WTC11 (cell line): ENCODE measurements at regions of chr1 and their contacts with region 1.

Region 1: GRCh38 chr1:30684881-30685795 is 38.2 kb downstream of the MATN1 start:
- DNase-seq: peak; percentile 99
- ATAC-seq: peak; percentile 98
- H3K4me3 Mint-ChIP-seq: peak overlapping the region; percentile 71
- H3K27ac Mint-ChIP-seq: no peak overlapping the region
- H3K4me1 Mint-ChIP-seq: peaks cover 24% of the 10 kb centered on the region
- H3K27me3 Mint-ChIP-seq: peaks cover 22% of the 10 kb centered on the region
- CTCF ChIP-seq: no peak

Region 2: GRCh38 chr1:29900712-29901111 is 784.4 kb before region 1 on chr1:
- CTCF ChIA-PET with region 1: no interaction called
- POLR2A ChIA-PET with region 1: interaction called, 11 read pairs
- DNase-seq: no peak
- ATAC-seq: no peak
- H3K4me3 Mint-ChIP-seq: no peak overlapping the region
- H3K27ac Mint-ChIP-seq: no peak overlapping the region
- H3K4me1 Mint-ChIP-seq: peaks cover 34% of the 10 kb centered on the region
- H3K27me3 Mint-ChIP-seq: no peaks in the 10 kb centered on the region
- CTCF ChIP-seq: no peak

Region 3: DNA sequence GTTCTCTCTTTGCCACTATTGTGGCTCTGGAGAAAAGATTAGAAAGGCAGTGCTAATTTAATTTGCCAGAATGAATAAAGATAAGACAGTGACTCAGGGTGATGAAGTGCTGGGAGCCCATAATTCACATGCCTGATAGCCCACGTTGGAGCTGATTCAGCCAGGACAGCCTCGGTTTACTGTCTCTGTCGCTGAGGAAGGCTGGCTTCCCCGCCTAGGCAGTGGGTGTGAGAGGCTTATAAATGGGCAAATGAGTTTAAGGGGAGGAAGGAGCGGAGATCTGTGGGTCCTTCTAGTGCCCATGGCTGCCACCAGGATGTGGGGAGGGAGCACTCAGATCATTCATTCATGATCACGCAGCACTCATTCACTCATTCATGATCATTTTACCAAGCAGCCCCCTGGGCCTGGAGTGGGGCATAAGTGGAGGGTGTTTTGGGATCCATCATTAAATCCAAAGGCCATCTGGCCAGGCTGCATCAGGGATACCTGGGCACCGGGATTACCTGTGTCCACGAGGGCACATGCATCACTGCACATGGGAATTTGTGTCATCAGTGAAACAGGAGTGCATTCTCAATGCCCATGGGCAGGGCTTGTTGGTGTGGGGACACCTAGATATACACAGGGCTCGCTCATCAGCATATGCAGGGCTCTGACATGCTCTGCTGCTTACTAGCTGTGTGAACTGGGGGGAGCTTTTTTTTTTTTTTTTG is 277.1 kb before region 1 on chr1:
- CTCF ChIA-PET with region 1: interaction called, 21 read pairs
- POLR2A ChIA-PET with region 1: interaction called, 3 read pairs
- DNase-seq: no peak
- ATAC-seq: no peak
- H3K4me3 Mint-ChIP-seq: no peak overlapping the region
- H3K27ac Mint-ChIP-seq: no peak overlapping the region
- H3K4me1 Mint-ChIP-seq: peaks cover 9% of the 10 kb centered on the region
- H3K27me3 Mint-ChIP-seq: no peaks in the 10 kb centered on the region; the same call in 1 of the 2 replicates
- CTCF ChIP-seq: no peak

Region 4: GRCh38 chr1:30623431-30623830 is 61.7 kb before region 1 on chr1:
- CTCF ChIA-PET with region 1: no interaction called
- POLR2A ChIA-PET with region 1: no interaction called
- DNase-seq: no peak
- ATAC-seq: no peak
- H3K4me3 Mint-ChIP-seq: no peak overlapping the region
- H3K27ac Mint-ChIP-seq: no peak overlapping the region
- H3K4me1 Mint-ChIP-seq: no peaks in the 10 kb centered on the region
- H3K27me3 Mint-ChIP-seq: peaks cover 13% of the 10 kb centered on the region
- CTCF ChIP-seq: no peak

Region 5: DNA sequence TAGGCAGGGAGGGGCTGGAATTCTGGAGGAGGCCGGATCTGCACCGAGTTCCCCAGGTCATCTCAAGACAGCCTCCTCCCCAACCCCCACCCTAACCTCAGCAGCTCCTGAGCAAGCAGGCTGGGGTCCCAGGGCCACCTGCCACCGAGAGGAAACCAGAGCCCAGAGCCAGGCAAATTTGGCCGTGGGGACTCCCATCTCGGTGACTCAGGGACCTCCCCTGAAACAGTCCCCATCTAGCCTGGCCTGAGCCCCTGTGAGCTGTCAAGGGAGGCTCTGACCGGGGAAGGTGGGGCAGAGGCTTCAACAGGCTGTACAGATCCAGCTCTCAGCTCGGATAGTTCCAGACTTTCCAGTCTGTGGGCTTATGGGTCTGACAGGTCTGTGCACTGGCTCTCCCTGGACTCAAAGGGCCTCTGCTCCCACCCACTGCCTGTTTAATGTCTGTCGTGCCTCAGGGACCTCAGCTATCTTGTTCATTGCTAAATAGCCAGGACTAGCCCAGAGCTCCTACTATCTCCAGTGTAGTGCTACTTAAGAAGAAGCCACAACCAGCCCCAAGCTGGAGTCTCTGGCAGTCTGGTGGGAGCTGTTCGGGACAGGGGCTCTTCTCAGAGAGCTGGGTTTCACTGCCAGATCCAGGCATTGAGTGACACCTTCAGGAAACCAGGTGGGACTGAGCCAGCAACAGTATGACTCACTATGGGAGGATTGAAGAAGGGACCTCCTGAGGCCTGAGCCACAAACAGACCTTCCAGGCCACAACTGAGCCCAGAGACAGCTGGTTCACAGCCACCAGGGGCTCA is 12.6 kb after region 1 on chr1:
- CTCF ChIA-PET with region 1: interaction called, 10 read pairs
- POLR2A ChIA-PET with region 1: no interaction called
- DNase-seq: no peak
- ATAC-seq: no peak
- H3K4me3 Mint-ChIP-seq: no peak overlapping the region
- H3K27ac Mint-ChIP-seq: no peak overlapping the region
- H3K4me1 Mint-ChIP-seq: peaks cover 12% of the 10 kb centered on the region
- H3K27me3 Mint-ChIP-seq: no peaks in the 10 kb centered on the region
- CTCF ChIP-seq: no peak

Region 6: DNA sequence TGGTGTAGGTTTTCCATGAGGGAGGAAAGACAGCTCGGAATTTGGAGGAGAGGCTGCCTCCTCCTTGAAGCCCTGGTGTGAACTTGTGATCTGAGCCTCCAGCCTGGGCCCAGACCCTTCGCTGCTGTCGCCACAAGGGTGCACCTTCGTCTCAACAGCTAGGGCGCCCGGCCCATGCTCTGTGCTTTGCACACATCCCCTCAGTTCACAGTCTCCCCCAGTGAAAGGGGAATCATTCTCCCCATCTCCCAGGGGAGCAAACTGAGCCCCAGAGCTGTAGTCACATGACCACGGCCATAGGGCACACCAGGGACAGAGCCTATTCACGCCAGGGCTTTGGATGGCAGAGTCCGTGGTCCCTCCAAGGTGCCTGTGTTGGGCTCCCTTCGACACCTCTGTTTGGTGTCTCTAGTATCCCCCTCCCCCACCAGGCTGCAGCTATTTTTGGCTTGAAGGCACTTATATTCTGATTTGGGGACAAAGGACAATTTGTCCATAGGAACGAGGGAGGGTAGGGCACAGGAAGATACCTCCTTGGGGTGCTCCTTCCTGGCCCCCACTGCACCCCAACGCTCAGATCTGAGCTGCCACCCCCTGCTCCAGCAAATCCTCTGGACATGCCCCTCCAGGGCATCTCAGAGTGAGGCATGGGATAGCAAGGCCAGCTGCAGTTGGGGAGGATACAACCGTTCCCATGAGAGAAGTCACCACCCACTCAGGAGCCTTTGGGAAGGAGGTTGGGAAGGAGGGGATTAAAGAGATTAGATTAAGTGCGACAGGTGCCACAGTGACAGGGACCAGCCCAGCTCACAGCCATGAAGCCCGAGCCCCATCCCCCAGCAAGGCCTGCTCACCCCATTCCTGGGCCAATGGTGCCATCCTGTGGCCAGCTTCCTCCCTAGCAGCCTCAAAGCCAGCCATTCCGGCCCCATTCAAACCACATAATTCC is 22.5 kb after region 1 on chr1:
- CTCF ChIA-PET with region 1: interaction called, 26 read pairs
- POLR2A ChIA-PET with region 1: interaction called, 3 read pairs
- DNase-seq: peak; percentile 88
- ATAC-seq: peak; percentile 92
- H3K4me3 Mint-ChIP-seq: no peak overlapping the region
- H3K27ac Mint-ChIP-seq: no peak overlapping the region
- H3K4me1 Mint-ChIP-seq: peaks cover 3% of the 10 kb centered on the region; the same call in 1 of the 2 replicates
- H3K27me3 Mint-ChIP-seq: peaks cover 2% of the 10 kb centered on the region; the same call in 1 of the 2 replicates
- CTCF ChIP-seq: peak; percentile 73

Region 7: DNA sequence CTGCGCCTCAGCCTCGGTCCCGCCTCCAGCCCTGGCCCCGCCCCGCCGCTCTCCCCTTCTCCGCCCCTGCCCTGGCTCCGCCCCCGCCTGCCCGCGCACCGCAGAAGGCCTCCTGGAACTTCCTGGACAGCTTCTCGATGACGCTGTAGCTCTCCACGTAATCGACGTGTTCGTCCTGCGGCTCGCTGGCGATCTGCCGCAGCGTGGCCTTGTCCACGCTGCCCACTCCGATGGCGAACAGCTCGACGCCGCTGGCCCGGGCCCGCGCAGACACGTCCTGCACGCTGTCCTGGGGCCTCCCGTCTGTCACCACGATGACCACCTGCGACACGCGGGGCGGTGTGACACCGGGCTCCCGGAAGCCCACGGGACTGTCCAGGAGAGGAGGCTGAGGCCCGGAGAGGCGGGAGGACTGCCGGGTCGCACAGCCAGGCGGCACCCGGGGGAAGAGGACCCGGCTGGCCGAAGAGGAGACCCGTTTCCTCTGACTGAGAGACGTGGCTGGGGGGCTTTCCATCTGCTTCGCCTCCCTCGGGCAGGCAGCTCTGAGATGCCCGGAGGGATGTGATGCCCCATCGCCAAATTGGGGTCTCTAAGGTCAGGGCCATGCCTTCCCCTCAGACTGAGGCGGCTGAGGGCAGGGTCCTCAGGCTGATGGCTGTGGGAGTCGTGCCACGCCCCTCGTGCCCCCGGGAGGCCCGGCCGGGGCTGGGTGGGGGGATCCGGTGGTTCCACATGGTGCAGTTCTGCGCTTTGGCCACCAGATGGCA is 33.7 kb after region 1 on chr1:
- CTCF ChIA-PET with region 1: interaction called, 13 read pairs
- POLR2A ChIA-PET with region 1: no interaction called
- DNase-seq: peak; percentile 92
- ATAC-seq: peak; percentile 63
- H3K4me3 Mint-ChIP-seq: peak overlapping the region; percentile 75
- H3K27ac Mint-ChIP-seq: no peak overlapping the region
- H3K4me1 Mint-ChIP-seq: peaks cover under 1% of the 10 kb centered on the region
- H3K27me3 Mint-ChIP-seq: peaks cover 4% of the 10 kb centered on the region
- CTCF ChIP-seq: peak; percentile 98